ENCODE measurements at regions of chr4 and their contacts with region 1.

Region 1: GRCh38 chr4:139978692-139979091 is 175.3 kb downstream of the MAML3 start:
- DNase-seq: peak; percentile 75
- ATAC-seq: peak; percentile 90
- H3K4me3 ChIP-seq: no peak overlapping the region
- H3K27ac ChIP-seq: peak overlapping the region; percentile 40; the same call in 1 of the 2 replicates
- H3K4me1 ChIP-seq: peaks cover 46% of the 10 kb centered on the region
- H3K27me3 ChIP-seq: no peaks in the 10 kb centered on the region
- CTCF ChIP-seq: no peak
- EP300 ChIP-seq: peak; percentile 44 to 74; a peak in 3 of 4 replicates
- POLR2A ChIP-seq: no peak
- RAD21 ChIP-seq: no peak

Region 2: DNA sequence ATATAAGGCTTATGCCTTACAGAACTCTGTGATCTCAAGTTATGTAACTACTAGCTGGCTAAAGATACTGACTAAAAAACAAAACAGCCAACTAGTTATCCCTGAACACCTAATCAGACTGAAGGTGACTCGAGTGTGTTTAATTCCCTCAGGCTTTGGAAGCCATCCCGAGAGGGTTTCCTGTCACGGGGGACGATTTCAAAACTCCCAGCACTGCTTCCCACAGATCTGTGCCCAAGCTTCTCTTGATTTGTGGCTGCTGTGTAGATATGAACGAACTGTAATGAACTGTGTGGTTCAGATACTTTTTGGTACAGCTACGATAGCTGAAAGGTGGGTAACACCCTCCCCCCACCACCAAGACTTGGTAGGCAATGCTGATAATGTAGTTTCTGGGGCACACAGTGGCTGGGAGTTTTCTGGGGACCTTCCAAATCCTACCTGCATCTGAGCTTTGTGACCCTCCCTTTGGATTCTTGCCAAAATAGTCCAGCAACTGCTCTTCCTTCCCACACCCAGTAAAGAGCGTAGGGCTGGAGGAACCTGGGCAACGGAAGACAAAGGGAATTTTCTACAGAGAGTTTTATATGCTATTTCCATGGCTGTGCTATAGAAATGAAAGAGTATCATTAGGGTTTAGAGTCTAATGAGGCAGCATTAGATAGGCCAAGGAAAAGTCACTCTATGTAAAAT is 164.2 kb before region 1 on chr4:
- CTCF ChIA-PET with region 1: no interaction called
- POLR2A ChIA-PET with region 1: no interaction called
- RAD21 ChIA-PET with region 1: no interaction called
- SMC1A ChIA-PET with region 1: no interaction called
- in situ Hi-C with region 1: no loop called
- intact Hi-C with region 1: no loop called
- DNase-seq: no peak
- ATAC-seq: no peak
- H3K4me3 ChIP-seq: no peak overlapping the region
- H3K27ac ChIP-seq: no peak overlapping the region
- H3K4me1 ChIP-seq: no peaks in the 10 kb centered on the region
- H3K27me3 ChIP-seq: no peaks in the 10 kb centered on the region; a peak in 2 of 4 replicates
- CTCF ChIP-seq: no peak
- EP300 ChIP-seq: no peak
- POLR2A ChIP-seq: no peak
- RAD21 ChIP-seq: no peak

Region 3: DNA sequence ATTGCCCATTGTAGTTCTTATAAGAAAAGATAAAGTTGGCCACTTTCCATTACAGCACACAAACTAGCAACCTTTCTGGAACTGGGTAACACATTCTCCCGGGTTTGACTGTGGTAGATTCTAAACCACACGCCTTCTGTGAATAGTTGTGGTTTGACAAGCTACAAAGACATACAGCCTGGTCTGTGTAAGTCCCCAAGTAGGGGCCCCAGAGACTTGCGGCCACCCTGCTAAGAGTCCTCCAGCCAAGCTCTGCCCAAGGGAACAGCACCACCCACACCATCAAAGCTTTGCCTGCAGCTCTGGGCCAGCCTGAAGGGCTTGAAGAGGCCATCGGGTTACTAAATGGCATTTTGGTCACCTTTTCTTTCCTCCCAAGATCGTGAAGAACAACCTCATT is 28.1 kb before region 1 on chr4:
- CTCF ChIA-PET with region 1: interaction called, 6 read pairs
- POLR2A ChIA-PET with region 1: no interaction called
- RAD21 ChIA-PET with region 1: interaction called, 4 read pairs
- SMC1A ChIA-PET with region 1: interaction called, 8 read pairs
- in situ Hi-C with region 1: no loop called
- intact Hi-C with region 1: loop called (anchors 1 kb)
- DNase-seq: peak; percentile 83
- ATAC-seq: peak; percentile 97
- H3K4me3 ChIP-seq: no peak overlapping the region
- H3K27ac ChIP-seq: no peak overlapping the region
- H3K4me1 ChIP-seq: peaks cover 18% of the 10 kb centered on the region
- H3K27me3 ChIP-seq: no peaks in the 10 kb centered on the region
- CTCF ChIP-seq: no peak
- EP300 ChIP-seq: 0 out of 4 replicates have a peak, but pooled peaks of 1 of the 2 experiments have one; percentile 14
- POLR2A ChIP-seq: no peak
- RAD21 ChIP-seq: 0 out of 2 replicates have a peak, but pooled peaks have one; percentile 19

Measured in GM12878 (cell line).